Left cardiac atrium (tissue), 4 donors: ENCODE measurements at regions of chr17 and their contacts with region 1.

Region 1: DNA sequence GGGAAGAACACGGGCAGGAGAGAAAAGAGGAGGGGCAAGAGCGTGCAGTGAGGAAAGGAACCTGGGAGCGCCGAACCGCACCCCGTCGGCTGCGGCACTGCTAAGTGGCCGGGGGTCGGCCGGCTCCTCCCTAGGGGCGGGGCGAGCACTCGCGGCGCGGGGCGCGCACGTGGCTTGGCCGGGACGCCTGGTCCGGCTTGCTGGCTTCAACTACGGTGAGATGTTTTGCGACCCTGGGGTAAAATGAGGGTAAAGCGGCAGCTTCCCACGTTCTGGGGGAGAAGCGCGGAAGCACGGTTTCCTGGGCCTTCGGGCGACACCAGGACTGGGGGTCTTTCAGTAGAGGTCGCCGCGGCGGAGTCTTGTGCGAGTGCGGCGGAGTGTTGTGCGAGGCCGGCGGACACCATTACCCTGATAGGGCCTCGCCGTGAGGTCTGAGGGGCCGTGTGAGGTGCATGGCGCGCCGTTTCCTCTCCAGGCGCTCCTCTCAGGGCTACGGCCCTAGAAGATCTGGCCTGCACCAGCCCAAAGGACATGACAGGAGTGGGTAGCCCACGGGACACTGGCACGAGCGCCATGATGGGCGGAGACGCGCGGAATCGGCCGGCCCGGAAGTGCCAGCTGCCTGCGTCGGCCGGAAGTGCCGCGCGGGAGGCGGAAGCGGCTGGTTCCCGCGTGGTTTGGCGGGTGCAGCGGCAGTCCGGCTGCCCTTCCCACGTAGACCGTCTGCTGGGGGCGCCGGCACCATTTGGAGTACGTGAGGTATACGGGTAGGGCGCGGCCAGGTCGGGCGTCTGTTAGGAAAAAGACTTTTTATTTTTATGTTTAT is at the starts of genes MYO19 and PIGW:
- DNase-seq: peak; percentile 93
- ATAC-seq: peak; percentile 95 to 97
- total RNA-seq, gene MYO19: 18.0 to 29.1 TPM
- total RNA-seq, gene PIGW: 5.7 to 9.9 TPM

Region 2: GRCh38 chr17:36591434-36592315 is 56.6 kb after region 1 on chr17 and contains the start of gene DHRS11:
- intact Hi-C with region 1: loop called in 1 of 2 experiments (anchors 5 kb)
- DNase-seq: peak; percentile 90
- ATAC-seq: peak; percentile 95 to 96
- total RNA-seq, gene DHRS11: 14.8 to 22.2 TPM